ENCODE measurements at regions of chr16 and their contacts with region 1.

Region 1: GRCh38 chr16:72818236-72818845 is 229.6 kb downstream of the ZFHX3 start:
- DNase-seq: no peak
- ATAC-seq: no peak
- H3K4me3 ChIP-seq: no peak overlapping the region
- H3K27ac ChIP-seq: no peak overlapping the region
- H3K4me1 ChIP-seq: peaks cover 23 to 46% of the 10 kb centered on the region in 2 donors
- H3K27me3 ChIP-seq: no peaks in the 10 kb centered on the region
- CTCF ChIP-seq: no peak
- POLR2A ChIP-seq: no peak

Region 2: DNA sequence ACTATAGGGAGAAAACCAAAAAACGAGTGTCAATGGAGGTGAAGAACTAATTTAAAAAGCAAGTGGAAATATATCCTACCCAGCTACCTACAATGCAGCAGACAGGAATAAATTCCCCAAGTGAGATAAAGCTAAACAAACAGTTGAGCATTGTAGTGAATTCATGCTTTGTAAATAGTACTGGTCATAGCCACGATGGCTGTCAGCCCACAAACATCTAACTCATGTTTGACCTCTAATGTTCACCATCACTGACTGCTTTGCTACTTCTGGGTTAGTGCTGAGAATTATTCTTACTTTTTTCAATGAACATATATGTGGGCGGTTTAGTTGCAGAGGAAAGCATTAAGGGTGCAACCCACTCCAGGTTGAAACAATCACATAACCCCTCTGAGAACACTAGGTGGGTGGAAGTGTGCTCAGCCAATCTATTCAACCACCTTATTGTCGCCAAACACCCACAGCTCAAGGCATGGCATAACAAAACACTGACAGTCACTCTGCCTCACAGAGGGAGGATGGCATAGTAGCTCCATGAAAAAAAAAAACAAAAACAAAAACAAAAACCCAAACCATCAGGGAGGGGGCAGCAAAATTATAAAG is 34.5 kb before region 1 on chr16:
- in situ Hi-C with region 1: no loop called
- intact Hi-C with region 1: loop called (anchors 2 kb)
- DNase-seq: no peak
- ATAC-seq: no peak
- H3K4me3 ChIP-seq: no peak overlapping the region
- H3K27ac ChIP-seq: no peak overlapping the region
- H3K4me1 ChIP-seq: peaks cover 0 to 3% of the 10 kb centered on the region in 2 donors
- H3K27me3 ChIP-seq: no peaks in the 10 kb centered on the region
- CTCF ChIP-seq: no peak
- POLR2A ChIP-seq: no peak

Region 3: DNA sequence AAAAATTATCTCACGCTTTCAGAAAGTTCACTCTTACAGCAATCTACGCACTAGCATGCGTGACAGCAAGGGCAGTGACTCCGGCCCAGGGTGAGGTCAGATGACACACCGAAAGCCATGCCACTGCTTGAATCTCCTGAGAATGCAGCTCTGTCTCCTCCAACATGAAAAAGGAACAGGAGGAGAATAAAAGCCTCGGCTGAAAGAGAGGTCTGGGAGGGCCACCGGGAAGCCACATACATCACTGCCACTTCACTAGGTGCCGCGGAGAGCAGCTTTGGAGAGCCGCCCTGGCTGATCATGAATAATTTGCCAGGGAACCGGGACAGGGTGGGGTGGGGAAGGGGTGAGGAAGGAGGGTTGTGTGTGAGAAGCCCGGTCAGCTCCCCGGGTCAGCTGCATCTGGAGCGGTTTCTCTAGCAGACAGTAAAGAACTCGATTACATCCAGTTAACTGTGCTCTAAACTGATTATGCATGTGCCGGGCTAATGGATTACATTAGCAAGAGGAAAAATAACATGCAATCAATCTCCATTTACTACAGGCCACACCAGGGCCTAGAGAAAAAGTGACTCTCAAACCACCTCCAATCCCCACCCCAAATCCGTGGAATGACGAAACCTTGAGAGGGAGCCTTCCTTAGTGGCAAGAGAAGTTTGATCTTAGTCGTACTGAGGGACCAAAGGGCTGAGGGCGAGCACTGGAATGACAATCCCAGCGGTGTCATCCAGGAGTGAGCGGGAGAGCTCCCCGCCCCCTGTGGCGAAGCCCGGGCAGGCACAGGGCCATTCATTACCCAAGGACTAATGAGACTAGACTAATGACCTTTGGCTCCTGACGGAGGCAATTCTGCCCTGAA is 129.3 kb after region 1 on chr16:
- in situ Hi-C with region 1: no loop called
- intact Hi-C with region 1: no loop called
- DNase-seq: peak in 1 of 2 donors; percentile 59
- ATAC-seq: peak; percentile 81
- H3K4me3 ChIP-seq: peak overlapping the region in 1 of 4 donors; percentile 35
- H3K27ac ChIP-seq: peak overlapping the region; percentile 69 to 83 (median 82)
- H3K4me1 ChIP-seq: peaks cover 38 to 57% of the 10 kb centered on the region in 2 donors
- H3K27me3 ChIP-seq: no peaks in the 10 kb centered on the region
- CTCF ChIP-seq: no peak
- POLR2A ChIP-seq: no peak

Measured in gastrocnemius medialis (tissue), 4 donors.